ENCODE measurements at regions of chr6 and their contacts with region 1.

Region 1: DNA sequence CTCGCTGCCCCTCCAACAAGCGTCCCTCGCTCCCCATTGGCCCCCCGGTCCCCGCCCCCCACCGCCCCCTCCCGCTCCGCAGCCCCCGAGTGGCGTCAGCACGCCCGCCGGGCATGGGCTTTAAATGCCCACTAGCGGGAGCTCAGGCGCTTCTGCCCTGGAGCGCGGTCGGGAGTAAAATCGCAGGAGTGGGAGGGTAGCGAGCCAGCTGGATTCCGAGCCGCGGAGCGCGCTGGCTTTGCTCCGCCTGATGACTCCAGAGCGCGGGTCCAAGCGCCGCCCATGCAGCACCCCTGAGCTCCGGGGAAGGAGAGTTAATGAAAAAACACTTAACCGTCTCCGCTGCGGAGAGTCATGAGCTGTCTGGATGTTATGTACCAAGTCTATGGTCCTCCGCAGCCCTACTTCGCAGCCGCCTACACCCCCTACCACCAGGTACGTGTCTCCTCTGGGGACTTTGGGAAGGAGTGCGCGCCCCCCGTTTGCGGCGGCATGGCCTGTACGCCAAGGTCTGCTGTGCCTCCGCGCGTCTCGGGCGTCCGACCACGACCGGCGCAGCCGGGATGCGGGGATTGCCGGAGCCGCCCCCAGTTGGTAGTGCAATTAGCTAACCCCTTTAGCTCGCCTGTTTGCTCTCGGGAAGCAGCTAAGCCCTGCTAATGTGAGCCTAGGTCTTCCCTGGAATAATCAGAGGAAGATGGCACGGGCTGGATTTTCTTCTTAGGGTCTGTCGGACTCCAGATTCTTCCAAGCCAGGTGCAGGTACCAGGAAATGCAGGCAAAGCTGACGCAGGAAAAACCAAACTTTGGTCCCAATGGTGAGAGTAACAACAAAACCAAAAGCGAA is at the start of gene VGLL2:
- DNase-seq: peak; percentile 78 to 85
- ATAC-seq: peak; percentile 65 to 69
- H3K4me3 ChIP-seq: peak within 1 kb of the TSS; percentile 69 to 91 (median 84)
- H3K27ac ChIP-seq: peak within 1 kb of the TSS; percentile 90 to 99 (median 97)
- H3K4me1 ChIP-seq: peaks cover 10 to 31% of the 10 kb centered on the region in 2 donors
- H3K27me3 ChIP-seq: peaks cover 0 to 4% (median 0%) of the 10 kb centered on the region in 3 donors
- CTCF ChIP-seq: peak in 3 of 5 experiments; percentile 7 to 55 (median 46)
- POLR2A ChIP-seq: peak; percentile 79 to 92
- total RNA-seq, gene VGLL2: 4.9 to 27.5 (median 10.1) TPM

Region 2: GRCh38 chr6:116975600-116975999 is 290.0 kb before region 1 on chr6:
- in situ Hi-C with region 1: loop called in 1 of 4 experiments (anchors 5 kb)
- intact Hi-C with region 1: loop called (anchors 1 kb)
- DNase-seq: peak; percentile 65 to 68
- ATAC-seq: peak; percentile 86 to 94
- H3K4me3 ChIP-seq: no peak overlapping the region
- H3K27ac ChIP-seq: peak overlapping the region; percentile 78 to 91 (median 88)
- H3K4me1 ChIP-seq: peaks cover 27 to 30% of the 10 kb centered on the region in 2 donors
- H3K27me3 ChIP-seq: no peaks in the 10 kb centered on the region
- CTCF ChIP-seq: no peak
- POLR2A ChIP-seq: peak; percentile 39 to 66

Region 3: GRCh38 chr6:117194978-117195377 is 70.7 kb before region 1 on chr6:
- in situ Hi-C with region 1: no loop called
- intact Hi-C with region 1: loop called (anchors 5 kb)
- DNase-seq: no peak
- ATAC-seq: no peak
- H3K4me3 ChIP-seq: no peak overlapping the region
- H3K27ac ChIP-seq: peak overlapping the region in 1 of 4 donors; percentile 10
- H3K4me1 ChIP-seq: peaks cover 4 to 14% of the 10 kb centered on the region in 2 donors
- H3K27me3 ChIP-seq: no peaks in the 10 kb centered on the region
- CTCF ChIP-seq: no peak
- POLR2A ChIP-seq: no peak

Region 4: GRCh38 chr6:117602151-117602898 is 336.7 kb after region 1 on chr6 and contains the start of gene GOPC:
- in situ Hi-C with region 1: no loop called
- intact Hi-C with region 1: loop called (anchors 5 kb)
- DNase-seq: peak; percentile 95 to 97
- ATAC-seq: peak; percentile 97 to 99
- H3K4me3 ChIP-seq: peak within 1 kb of the TSS; percentile 87 to 99 (median 92)
- H3K27ac ChIP-seq: peak within 1 kb of the TSS; percentile 93 to 94 (median 93)
- H3K4me1 ChIP-seq: peaks cover 22 to 27% of the 10 kb centered on the region in 2 donors
- H3K27me3 ChIP-seq: no peaks in the 10 kb centered on the region
- CTCF ChIP-seq: peak in 2 of 5 experiments; percentile 10 to 19
- POLR2A ChIP-seq: peak; percentile 80 to 85
- total RNA-seq, gene GOPC: 12.0 to 19.3 (median 13.6) TPM

Region 5: DNA sequence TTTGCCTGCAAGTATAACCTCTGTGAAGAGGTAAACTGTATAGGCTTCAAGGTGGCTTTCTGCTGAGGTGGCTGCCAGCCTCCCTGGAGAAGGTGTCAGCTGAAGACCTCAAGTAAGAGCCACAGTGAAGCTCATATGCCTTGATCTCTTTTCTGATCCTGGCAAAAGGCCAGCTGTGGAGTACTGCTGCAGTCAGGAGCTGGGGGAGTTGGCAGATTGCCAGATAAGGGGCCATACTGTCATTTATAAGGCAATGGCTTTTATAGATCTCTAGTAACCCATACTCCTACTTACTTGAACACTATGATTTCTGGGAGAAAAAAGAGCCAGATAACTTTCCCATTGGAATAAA is 1394.6 kb after region 1 on chr6:
- in situ Hi-C with region 1: no loop called
- intact Hi-C with region 1: loop called (anchors 10 kb)
- DNase-seq: peak; percentile 6 to 31
- ATAC-seq: peak in 1 of 2 donors; percentile 22
- H3K4me3 ChIP-seq: no peak overlapping the region
- H3K27ac ChIP-seq: peak overlapping the region; percentile 48 to 76 (median 72)
- H3K4me1 ChIP-seq: peaks cover 38 to 39% of the 10 kb centered on the region in 2 donors
- H3K27me3 ChIP-seq: no peaks in the 10 kb centered on the region
- CTCF ChIP-seq: no peak
- POLR2A ChIP-seq: no peak

Measured in gastrocnemius medialis (tissue), 4 donors.